PC-3 (cell line): ENCODE measurements at regions of chr7 and their contacts with region 1.

Region 1: GRCh38 chr7:97027427-97028234 is 3.0 kb upstream of the DLX5 start:
- DNase-seq: peak; percentile 83
- ATAC-seq: peak; percentile 72
- H3K4me3 ChIP-seq: peak overlapping the region; percentile 66
- H3K27ac ChIP-seq: no peak overlapping the region
- H3K4me1 ChIP-seq: peaks cover 4% of the 10 kb centered on the region
- H3K27me3 ChIP-seq: no peaks in the 10 kb centered on the region
- CTCF ChIP-seq: peak; percentile 87

Region 2: DNA sequence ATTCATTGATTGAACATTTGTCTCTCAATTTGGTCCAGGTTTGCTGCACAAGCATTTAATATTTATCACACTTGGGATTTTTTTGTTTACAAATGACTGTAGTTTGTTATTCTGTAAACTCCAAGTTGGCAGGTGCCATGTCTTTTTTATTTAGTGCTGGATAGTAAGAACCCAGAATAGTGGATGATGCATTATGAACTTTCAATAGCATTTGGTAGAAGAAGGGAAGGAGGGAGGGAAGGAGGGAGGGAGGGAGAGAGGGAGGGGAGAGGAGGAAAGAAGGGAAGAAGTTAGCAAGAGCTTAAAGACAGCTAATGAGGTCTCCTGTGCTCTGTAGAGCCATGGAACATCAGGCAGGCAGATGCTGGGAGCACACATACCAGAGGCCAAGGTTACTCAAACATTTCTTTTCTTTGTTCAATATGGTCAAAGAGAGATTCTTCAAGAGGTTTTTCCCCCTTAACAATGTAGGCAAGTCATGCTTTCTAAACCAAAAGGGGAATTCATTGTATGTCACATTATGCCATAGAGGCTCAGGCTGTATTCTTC is 1405.6 kb before region 1 on chr7:
- CTCF ChIA-PET with region 1: no interaction called
- POLR2A ChIA-PET with region 1: no interaction called
- intact Hi-C with region 1: no loop called
- DNase-seq: no peak
- ATAC-seq: no peak
- H3K4me3 ChIP-seq: no peak overlapping the region
- H3K27ac ChIP-seq: no peak overlapping the region
- H3K4me1 ChIP-seq: no peaks in the 10 kb centered on the region
- H3K27me3 ChIP-seq: peaks cover 18% of the 10 kb centered on the region
- CTCF ChIP-seq: no peak

Region 3: GRCh38 chr7:96179837-96180236 is 847.8 kb before region 1 on chr7:
- CTCF ChIA-PET with region 1: no interaction called
- POLR2A ChIA-PET with region 1: no interaction called
- intact Hi-C with region 1: loop called (anchors 5 kb)
- DNase-seq: peak; percentile 8
- ATAC-seq: peak; percentile 59
- H3K4me3 ChIP-seq: no peak overlapping the region
- H3K27ac ChIP-seq: no peak overlapping the region
- H3K4me1 ChIP-seq: peaks cover 11% of the 10 kb centered on the region; the same call in 1 of the 2 replicates
- H3K27me3 ChIP-seq: no peaks in the 10 kb centered on the region
- CTCF ChIP-seq: peak; percentile 42; the same call in 1 of the 2 replicates

Region 4: GRCh38 chr7:96414931-96415292 is 612.7 kb before region 1 on chr7:
- CTCF ChIA-PET with region 1: interaction called, 4 read pairs
- POLR2A ChIA-PET with region 1: no interaction called
- intact Hi-C with region 1: loop called (anchors 1 kb)
- DNase-seq: peak; percentile 72
- ATAC-seq: peak; percentile 95
- H3K4me3 ChIP-seq: no peak overlapping the region
- H3K27ac ChIP-seq: no peak overlapping the region
- H3K4me1 ChIP-seq: peaks cover 7% of the 10 kb centered on the region; the same call in 1 of the 2 replicates
- H3K27me3 ChIP-seq: no peaks in the 10 kb centered on the region
- CTCF ChIP-seq: peak; percentile 90

Region 5: DNA sequence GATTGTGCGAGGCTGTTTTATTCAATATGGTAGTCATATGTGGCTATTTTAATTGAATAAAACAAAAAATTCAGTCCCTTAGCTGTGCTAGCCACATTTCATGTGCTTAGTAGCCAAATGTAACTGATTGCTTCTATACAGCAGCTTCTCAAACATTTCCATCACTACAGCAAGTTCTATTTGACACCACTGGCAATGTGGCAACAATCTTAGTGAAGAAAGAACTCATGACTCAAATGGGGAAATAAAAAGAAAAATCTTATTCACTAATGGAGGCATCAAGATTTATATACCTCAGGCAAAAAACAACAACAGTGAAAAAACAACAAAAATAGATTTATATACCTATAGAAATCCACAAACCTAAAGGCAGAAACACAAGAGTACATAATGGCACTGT is 335.9 kb before region 1 on chr7:
- CTCF ChIA-PET with region 1: interaction called, 3 read pairs
- POLR2A ChIA-PET with region 1: no interaction called
- intact Hi-C with region 1: loop called (anchors 10 kb)
- DNase-seq: no peak
- ATAC-seq: no peak
- H3K4me3 ChIP-seq: no peak overlapping the region
- H3K27ac ChIP-seq: no peak overlapping the region
- H3K4me1 ChIP-seq: peaks cover 26% of the 10 kb centered on the region
- H3K27me3 ChIP-seq: no peaks in the 10 kb centered on the region
- CTCF ChIP-seq: no peak

Region 6: DNA sequence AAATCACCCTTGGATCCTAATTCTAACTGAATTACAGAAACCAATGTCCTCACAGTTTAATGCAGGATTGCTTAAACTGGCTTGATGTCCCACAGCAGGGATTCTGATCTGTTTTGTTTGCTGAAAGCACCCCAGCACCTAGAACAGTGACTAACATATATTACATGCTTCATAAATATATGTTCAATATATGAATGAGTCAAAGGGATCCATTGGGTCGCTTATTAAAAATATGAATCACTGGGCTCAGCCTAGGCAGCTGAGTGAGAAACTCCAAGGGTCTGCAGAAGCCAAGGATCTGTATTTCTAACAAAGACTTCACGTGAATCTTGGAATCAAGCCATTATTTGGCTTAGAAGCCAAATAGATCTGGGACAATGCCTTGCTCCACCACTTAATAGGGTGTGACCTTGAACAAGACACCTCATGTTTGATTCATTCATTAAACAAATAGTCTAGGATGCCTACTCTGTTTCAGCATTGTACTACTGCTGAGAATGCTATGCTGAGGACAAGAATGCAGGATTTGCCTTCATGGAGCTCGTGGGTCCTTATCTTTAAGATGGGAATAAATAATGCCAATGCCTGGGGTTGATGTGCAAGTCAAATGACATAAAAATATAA is 125.7 kb before region 1 on chr7:
- CTCF ChIA-PET with region 1: interaction called, 5 read pairs
- POLR2A ChIA-PET with region 1: no interaction called
- intact Hi-C with region 1: loop called (anchors 5 kb)
- DNase-seq: peak; percentile 92
- ATAC-seq: peak; percentile 92
- H3K4me3 ChIP-seq: no peak overlapping the region
- H3K27ac ChIP-seq: peak overlapping the region; percentile 68
- H3K4me1 ChIP-seq: peaks cover 23% of the 10 kb centered on the region
- H3K27me3 ChIP-seq: no peaks in the 10 kb centered on the region
- CTCF ChIP-seq: no peak